ENCODE measurements at regions of chr20 and their contacts with region 1.

Region 1: DNA sequence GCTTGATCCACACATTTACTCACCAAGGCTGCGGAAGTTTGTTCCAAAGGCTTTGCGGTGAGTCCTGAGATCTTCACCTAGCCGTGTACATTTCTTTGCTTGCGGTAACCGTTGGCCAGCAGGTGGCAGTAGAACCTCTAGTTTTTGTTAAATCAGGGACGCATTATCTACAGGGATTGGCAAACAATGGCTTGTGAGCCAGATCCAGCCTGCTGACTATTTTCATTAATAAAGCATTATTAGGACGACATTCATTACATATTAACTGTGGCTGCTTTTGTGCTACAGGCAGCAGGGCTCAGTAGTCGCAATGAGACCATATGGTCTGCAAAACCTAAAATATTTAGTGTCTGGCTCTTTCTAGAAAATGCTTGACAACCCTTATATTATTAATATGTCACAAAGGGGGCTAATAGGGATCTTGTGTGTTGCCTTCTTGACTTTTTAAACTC is 174.1 kb downstream of the DOK5 start:
- DNase-seq: peak; percentile 55 to 87
- ATAC-seq: peak; percentile 69

Region 2: GRCh38 chr20:54093423-54094267 is 555.9 kb before region 1 on chr20:
- intact Hi-C with region 1: loop called (anchors 5 to 10 kb)
- DNase-seq: no peak
- ATAC-seq: no peak

Region 3: DNA sequence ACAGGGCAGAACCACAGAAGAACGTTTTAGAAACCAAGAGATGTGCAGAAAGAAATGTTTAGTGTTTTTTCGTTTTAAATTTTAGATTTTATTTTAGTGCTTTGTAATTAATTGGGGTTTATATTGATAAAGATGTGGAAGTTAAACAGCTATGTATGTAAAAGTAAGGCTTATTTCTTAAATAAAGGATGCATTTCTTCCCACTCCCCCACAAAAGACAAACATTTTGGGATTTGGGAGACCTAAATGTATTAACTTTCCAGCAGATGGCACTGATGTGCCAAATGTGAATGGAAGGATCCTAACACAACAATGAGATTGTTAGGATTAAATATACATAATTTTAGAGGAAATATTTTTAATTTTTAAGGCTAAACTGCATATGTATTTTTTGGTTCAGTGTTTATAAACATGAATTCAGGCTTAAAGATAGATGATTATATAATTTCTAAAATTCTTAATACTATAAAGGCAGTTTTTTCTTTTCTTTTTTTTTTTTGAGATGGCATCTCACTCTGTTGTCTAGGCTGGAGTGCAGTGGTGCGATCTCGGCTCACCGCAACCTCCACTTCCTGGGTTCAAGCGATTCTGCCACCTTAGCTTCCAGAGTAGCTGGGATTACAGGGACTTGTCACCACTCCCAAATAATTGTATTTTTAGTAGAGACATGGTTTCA is 429.6 kb before region 1 on chr20:
- intact Hi-C with region 1: loop called in 1 of 2 experiments (anchors 10 kb)
- DNase-seq: no peak
- ATAC-seq: no peak

Measured in left colon (tissue), 2 donors.